ENCODE measurements at regions of chr5 and their contacts with region 1.

Region 1: DNA sequence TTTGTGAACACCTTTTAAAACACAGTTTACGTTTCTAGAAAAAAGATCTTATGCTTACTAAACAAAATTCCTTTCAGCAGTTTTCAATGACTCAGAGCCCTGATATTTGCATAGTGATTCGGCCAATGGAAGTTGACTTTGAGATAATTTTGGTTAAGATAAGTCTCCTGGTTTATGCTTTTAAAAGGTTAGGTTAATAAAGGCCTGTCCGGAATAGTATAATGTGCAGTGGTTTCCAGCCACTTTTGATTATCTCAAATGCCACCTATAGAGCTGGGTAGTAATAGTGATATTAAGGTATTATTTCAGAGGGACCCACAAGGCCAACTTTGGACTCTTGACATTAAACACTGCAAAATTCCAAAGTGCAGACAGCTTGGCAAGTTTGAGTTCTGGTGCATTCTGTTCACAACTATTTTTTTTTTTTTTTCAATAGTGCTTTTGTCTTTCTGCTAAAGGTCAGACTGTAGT is 86.1 kb downstream of the F2RL2 start:
- DNase-seq: no peak
- ATAC-seq: no peak
- H3K4me3 ChIP-seq: no peak overlapping the region
- H3K27ac ChIP-seq: no peak overlapping the region
- H3K4me1 ChIP-seq: peaks cover 0 to 6% (median 0%) of the 10 kb centered on the region in 12 donors
- H3K27me3 ChIP-seq: no peaks in the 10 kb centered on the region
- CTCF ChIP-seq: no peak
- POLR2A ChIP-seq: no peak

Region 2: GRCh38 chr5:75336625-75337339 is 1200.3 kb before region 1 on chr5 and contains the start of gene HMGCR:
- intact Hi-C with region 1: no loop called
- DNase-seq: peak; percentile 99 to 100 (median 99)
- ATAC-seq: peak; percentile 99 to 100 (median 100)
- H3K4me3 ChIP-seq: peak within 1 kb of the TSS; percentile 75 to 99 (median 89)
- H3K27ac ChIP-seq: peak within 1 kb of the TSS; percentile 54 to 98 (median 88)
- H3K4me1 ChIP-seq: peaks cover 0 to 28% (median 14%) of the 10 kb centered on the region in 12 donors
- H3K27me3 ChIP-seq: no peaks in the 10 kb centered on the region
- CTCF ChIP-seq: peak in 5 of 12 donors; percentile 19 to 55 (median 35)
- POLR2A ChIP-seq: peak in 1 of 2 donors; percentile 69
- total RNA-seq, gene HMGCR: 6.0 to 15.2 (median 11.9) TPM

Region 3: DNA sequence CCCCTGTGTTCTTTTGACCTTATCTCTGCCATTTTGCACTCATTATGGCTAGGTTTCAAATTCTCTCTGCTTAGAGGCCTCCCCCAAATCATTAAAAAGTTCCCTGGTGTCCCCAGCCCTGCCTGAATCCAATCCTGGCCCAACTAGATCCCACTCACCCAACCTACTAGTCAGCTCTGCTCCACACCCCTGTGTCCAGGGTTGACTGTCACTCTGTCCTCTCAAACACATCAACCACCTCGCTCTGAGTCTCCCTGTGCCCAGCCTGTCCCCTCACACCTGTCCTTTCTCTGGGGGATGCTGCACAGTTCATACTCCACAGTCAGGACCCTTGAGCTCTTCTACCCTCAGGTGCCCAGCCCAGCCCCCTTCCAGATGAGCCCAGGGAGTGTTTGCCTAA is 608.1 kb before region 1 on chr5:
- intact Hi-C with region 1: loop called in 1 of 10 experiments (anchors 10 kb)
- DNase-seq: no peak
- ATAC-seq: no peak
- H3K4me3 ChIP-seq: no peak overlapping the region
- H3K27ac ChIP-seq: no peak overlapping the region
- H3K4me1 ChIP-seq: no peaks in the 10 kb centered on the region
- H3K27me3 ChIP-seq: peaks cover 0 to 4% (median 0%) of the 10 kb centered on the region in 9 donors
- CTCF ChIP-seq: no peak
- POLR2A ChIP-seq: no peak

Region 4: DNA sequence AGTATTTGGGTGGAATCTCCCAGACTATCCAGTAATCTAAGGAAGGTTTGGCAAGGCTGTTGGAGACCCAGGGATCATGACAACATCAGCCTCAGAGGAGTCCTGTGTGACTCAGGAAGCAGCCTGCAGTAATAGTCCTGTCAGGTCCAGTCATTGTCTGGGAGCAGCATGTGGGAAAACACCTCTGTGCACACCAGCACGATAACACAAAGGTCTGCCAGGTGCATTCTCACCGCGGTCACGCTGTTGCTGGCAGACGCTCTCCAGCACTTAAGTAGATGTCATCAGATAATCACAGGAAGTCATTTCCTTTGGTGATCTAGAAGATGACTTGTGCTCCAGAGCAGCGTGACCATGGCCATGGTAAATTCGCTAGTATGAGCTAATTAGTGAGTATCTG is 233.2 kb before region 1 on chr5:
- intact Hi-C with region 1: no loop called
- DNase-seq: no peak
- ATAC-seq: peak in 1 of 4 donors; percentile 16
- H3K4me3 ChIP-seq: no peak overlapping the region
- H3K27ac ChIP-seq: no peak overlapping the region
- H3K4me1 ChIP-seq: peaks cover 0 to 38% (median 0%) of the 10 kb centered on the region in 12 donors
- H3K27me3 ChIP-seq: no peaks in the 10 kb centered on the region
- CTCF ChIP-seq: no peak
- POLR2A ChIP-seq: no peak

Region 5: GRCh38 chr5:76942581-76942980 is 405.5 kb after region 1 on chr5:
- intact Hi-C with region 1: no loop called
- DNase-seq: no peak
- ATAC-seq: no peak
- H3K4me3 ChIP-seq: no peak overlapping the region
- H3K27ac ChIP-seq: no peak overlapping the region
- H3K4me1 ChIP-seq: peaks cover 0 to 14% (median 2%) of the 10 kb centered on the region in 12 donors
- H3K27me3 ChIP-seq: peaks cover 0 to 7% (median 0%) of the 10 kb centered on the region in 9 donors
- CTCF ChIP-seq: no peak
- POLR2A ChIP-seq: no peak